ENCODE measurements at regions of chr6 and their contacts with region 1.

Region 1: DNA sequence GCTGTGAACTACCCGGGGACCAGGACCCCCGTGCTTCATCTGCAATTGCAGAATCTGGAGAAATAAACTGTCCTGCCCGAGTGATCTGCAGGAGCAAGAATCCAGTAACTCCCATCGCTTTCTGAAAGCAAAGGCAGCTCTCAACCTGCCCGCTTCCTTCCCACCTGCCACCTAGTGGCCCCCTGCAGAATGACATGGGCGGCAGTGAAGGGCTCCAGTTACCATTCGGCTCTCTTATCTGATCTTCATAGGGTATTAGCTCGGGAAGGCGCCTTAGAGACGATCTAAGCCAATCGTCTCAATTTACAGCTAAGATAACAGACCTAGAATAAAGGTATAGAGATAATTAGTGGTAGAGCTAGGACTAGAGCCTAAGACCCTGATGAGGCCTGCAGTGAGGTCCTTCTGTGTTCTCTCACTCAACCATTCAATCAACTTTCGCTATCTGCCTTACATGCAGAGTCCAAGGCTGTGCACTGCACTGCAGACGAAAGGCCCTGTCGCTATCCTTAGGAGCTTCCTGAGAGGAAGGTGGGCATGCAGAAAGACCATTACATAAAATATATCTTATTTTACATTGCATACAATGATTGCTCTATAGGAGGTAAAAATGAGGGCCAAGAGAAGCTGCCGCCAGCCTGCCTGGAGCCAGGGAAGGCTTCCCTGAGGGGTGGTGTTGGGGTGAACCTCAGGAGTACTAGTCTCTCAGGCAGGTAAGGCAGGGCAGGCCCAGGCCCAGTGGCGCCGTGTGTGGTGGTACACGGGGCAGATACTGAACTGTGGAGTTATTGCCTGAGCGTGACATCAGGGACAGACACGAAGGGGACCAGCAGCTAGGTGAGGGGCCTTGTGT is 7.1 kb upstream of the PSMG4 start:
- DNase-seq: peak; percentile 84
- ATAC-seq: peak; percentile 87
- H3K4me3 Mint-ChIP-seq: no peak overlapping the region
- H3K27ac Mint-ChIP-seq: no peak overlapping the region
- H3K4me1 Mint-ChIP-seq: peaks cover 9% of the 10 kb centered on the region
- H3K27me3 Mint-ChIP-seq: peaks cover 28% of the 10 kb centered on the region

Region 2: GRCh38 chr6:3108746-3109414 is 142.8 kb before region 1 on chr6:
- CTCF ChIA-PET with region 1: interaction called, 11 read pairs
- POLR2A ChIA-PET with region 1: no interaction called
- DNase-seq: no peak
- ATAC-seq: no peak
- H3K4me3 Mint-ChIP-seq: no peak overlapping the region
- H3K27ac Mint-ChIP-seq: no peak overlapping the region
- H3K4me1 Mint-ChIP-seq: peaks cover 2% of the 10 kb centered on the region
- H3K27me3 Mint-ChIP-seq: no peaks in the 10 kb centered on the region

Region 3: DNA sequence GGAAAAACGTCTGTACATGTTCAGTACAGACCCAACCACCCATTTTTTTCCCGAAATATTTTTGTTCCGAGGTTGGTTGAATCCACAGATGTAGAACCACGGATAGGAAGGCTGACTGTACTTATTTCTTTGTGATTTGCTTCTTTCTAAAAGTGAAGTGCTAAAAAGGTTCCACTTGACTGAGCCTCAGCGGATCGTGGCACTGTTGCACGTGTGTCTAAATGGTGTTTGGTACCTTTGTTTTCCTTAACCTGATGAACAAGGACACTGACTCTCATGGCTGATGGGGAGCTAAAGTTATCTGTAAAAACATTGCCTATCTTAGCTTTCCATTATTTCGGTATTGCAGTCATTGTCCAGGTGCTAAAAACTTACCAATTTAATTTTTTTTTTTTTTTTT is 127.0 kb before region 1 on chr6:
- CTCF ChIA-PET with region 1: interaction called, 27 read pairs
- POLR2A ChIA-PET with region 1: no interaction called
- DNase-seq: no peak
- ATAC-seq: no peak
- H3K4me3 Mint-ChIP-seq: no peak overlapping the region
- H3K27ac Mint-ChIP-seq: no peak overlapping the region
- H3K4me1 Mint-ChIP-seq: peaks cover 4% of the 10 kb centered on the region
- H3K27me3 Mint-ChIP-seq: peaks cover 2% of the 10 kb centered on the region

Region 4: DNA sequence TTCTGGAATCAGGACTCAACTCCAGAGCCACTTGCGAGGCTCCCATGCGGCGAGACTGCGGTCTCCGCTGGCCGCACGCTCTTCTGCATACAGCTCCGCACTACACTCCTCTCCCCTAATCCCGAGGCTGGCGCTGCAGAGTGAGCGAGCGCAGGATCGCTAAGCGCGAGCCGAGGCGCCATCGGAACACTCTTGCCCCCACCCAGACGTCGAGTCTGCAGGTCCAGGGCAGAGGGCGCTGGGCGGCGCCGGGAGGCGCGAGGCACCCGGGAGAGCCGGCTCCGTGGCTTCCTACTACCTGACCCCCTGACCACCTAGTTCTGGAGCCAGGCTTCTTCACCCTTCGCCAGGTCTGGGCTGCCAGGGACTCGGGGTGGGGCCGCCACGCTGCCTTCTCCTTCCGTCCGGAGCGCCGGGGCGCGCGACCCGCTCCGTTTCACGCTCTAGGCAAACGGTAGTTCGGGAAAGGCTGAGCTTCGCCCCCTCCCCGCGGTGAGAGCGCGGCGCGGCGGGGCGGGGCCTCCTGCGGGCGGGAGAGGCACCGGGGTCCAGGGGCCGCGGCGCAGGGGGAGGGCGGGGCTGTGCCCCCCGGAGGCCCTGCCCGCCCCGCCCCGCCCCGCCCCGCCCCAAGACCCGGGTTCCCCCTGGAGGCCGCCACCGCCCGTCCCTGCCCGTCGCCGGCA is 89.0 kb before region 1 on chr6:
- CTCF ChIA-PET with region 1: interaction called, 11 read pairs
- POLR2A ChIA-PET with region 1: no interaction called
- DNase-seq: peak; percentile 60
- ATAC-seq: peak; percentile 78
- H3K4me3 Mint-ChIP-seq: peak overlapping the region; percentile 80
- H3K27ac Mint-ChIP-seq: peak overlapping the region; percentile 70
- H3K4me1 Mint-ChIP-seq: peaks cover 29% of the 10 kb centered on the region
- H3K27me3 Mint-ChIP-seq: peaks cover 33% of the 10 kb centered on the region

Region 5: DNA sequence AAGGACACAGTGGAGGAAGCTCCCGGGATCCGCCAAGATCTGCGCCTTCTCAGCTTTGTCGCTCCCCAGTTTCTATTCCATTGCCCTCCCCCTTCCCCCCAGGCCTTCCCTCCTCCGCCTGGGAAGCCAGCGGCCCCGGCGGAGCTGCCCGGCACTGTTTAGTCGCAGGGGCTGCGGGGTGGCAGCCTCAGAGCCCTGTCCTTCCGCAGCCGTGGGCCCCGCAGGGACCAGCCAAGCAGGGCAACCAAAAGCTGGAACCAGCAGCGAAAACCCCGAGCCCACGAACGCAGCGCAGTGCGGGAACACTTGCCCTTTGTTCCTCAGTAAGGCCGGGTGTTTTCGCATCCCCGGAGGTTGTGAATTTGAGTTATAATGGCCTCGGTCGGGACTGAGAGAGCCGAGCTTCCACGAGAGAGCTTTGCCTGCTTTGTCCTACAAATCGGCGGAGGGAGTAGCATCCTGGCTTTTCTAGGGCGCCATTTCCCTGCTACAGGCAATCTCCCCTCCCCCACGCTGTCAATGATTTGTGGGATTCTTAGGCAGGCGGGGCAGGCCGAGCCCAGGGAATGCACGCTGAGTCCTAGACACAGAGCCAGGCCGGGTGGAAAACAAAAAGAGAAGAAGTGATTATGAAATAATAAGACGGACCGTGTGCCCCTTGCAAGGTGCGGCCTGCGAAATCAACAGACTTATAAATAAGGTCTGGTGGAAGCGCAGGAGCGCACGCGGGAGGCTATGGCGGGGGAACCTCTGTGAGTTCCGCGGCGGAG is 20.3 kb before region 1 on chr6:
- CTCF ChIA-PET with region 1: interaction called, 19 read pairs
- POLR2A ChIA-PET with region 1: no interaction called
- DNase-seq: no peak
- ATAC-seq: no peak
- H3K4me3 Mint-ChIP-seq: no peak overlapping the region
- H3K27ac Mint-ChIP-seq: no peak overlapping the region
- H3K4me1 Mint-ChIP-seq: peaks cover 48% of the 10 kb centered on the region
- H3K27me3 Mint-ChIP-seq: peaks cover 82% of the 10 kb centered on the region